ENCODE measurements at regions of chr1 and their contacts with region 1.

Region 1: GRCh38 chr1:65431111-65431705 is 10.7 kb downstream of the LEPR start:
- DNase-seq: peak; percentile 43
- ATAC-seq: peak; percentile 50; the same call in 2 of the 3 replicates
- H3K4me3 ChIP-seq: no peak overlapping the region
- H3K27ac ChIP-seq: no peak overlapping the region
- H3K4me1 ChIP-seq: peaks cover under 1% of the 10 kb centered on the region
- H3K27me3 ChIP-seq: no peaks in the 10 kb centered on the region
- CTCF ChIP-seq: peak; percentile 63
- EP300 ChIP-seq: no peak
- POLR2A ChIP-seq: no peak
- RAD21 ChIP-seq: peak; percentile 63

Region 2: GRCh38 chr1:65235867-65236805 is 195.1 kb before region 1 on chr1:
- CTCF ChIA-PET with region 1: no interaction called
- POLR2A ChIA-PET with region 1: no interaction called
- in situ Hi-C with region 1: no loop called
- intact Hi-C with region 1: no loop called
- DNase-seq: peak; percentile 46
- ATAC-seq: no peak
- H3K4me3 ChIP-seq: no peak overlapping the region
- H3K27ac ChIP-seq: no peak overlapping the region
- H3K4me1 ChIP-seq: no peaks in the 10 kb centered on the region
- H3K27me3 ChIP-seq: no peaks in the 10 kb centered on the region
- CTCF ChIP-seq: peak; percentile 50
- EP300 ChIP-seq: no peak
- POLR2A ChIP-seq: no peak
- RAD21 ChIP-seq: no peak

Region 3: GRCh38 chr1:65581119-65581518 is 149.9 kb after region 1 on chr1:
- CTCF ChIA-PET with region 1: interaction called, 5 read pairs
- POLR2A ChIA-PET with region 1: no interaction called
- in situ Hi-C with region 1: no loop called
- intact Hi-C with region 1: loop called (anchors 1 kb)
- DNase-seq: peak; percentile 9
- ATAC-seq: peak; percentile 75
- H3K4me3 ChIP-seq: no peak overlapping the region
- H3K27ac ChIP-seq: no peak overlapping the region
- H3K4me1 ChIP-seq: 0 out of 2 replicates have a peak, but pooled peaks cover 6% of the 10 kb centered on the region
- H3K27me3 ChIP-seq: no peaks in the 10 kb centered on the region
- CTCF ChIP-seq: peak; percentile 63
- EP300 ChIP-seq: no peak
- POLR2A ChIP-seq: no peak
- RAD21 ChIP-seq: 0 out of 2 replicates have a peak, but pooled peaks have one; percentile 13

Region 4: GRCh38 chr1:66253330-66253921 is 822.2 kb after region 1 on chr1:
- CTCF ChIA-PET with region 1: no interaction called
- POLR2A ChIA-PET with region 1: no interaction called
- in situ Hi-C with region 1: no loop called
- intact Hi-C with region 1: no loop called
- DNase-seq: peak; percentile 26
- ATAC-seq: peak; percentile 79
- H3K4me3 ChIP-seq: no peak overlapping the region
- H3K27ac ChIP-seq: no peak overlapping the region
- H3K4me1 ChIP-seq: no peaks in the 10 kb centered on the region
- H3K27me3 ChIP-seq: no peaks in the 10 kb centered on the region; a peak in 1 of 5 replicates
- CTCF ChIP-seq: peak; percentile 72
- EP300 ChIP-seq: no peak
- POLR2A ChIP-seq: no peak
- RAD21 ChIP-seq: no peak